ENCODE measurements at regions of chr4 and their contacts with region 1.

Region 1: DNA sequence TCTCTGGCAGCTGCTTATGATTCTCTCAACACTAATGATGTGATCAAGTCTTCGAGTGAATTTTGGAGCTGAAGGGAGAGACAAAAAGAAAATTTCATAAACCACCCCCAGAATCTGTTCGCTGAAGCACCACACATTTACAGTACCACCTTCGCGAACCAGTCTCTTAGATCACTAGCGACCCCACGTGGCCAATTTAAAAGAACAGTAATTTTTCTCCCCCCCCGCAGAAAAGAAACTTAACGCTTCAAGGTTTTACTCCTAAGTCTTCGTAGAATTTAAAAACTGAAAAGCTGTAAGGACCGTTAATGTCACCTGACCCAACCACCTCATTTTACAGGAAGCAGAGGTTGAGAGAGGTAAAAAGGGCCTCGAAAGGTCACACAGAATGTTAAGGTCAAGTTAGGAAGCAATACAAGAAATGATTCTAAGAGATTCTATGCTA is 187.5 kb downstream of the QDPR start:
- DNase-seq: peak; percentile 58 to 67 (median 64)
- ATAC-seq: peak; percentile 75
- H3K4me3 ChIP-seq: no peak overlapping the region
- H3K27ac ChIP-seq: no peak overlapping the region
- H3K4me1 ChIP-seq: no peaks in the 10 kb centered on the region
- H3K27me3 ChIP-seq: no peaks in the 10 kb centered on the region
- CTCF ChIP-seq: peak; percentile 63 to 83 (median 65)
- EP300 ChIP-seq: no peak
- POLR2A ChIP-seq: no peak
- RAD21 ChIP-seq: peak; percentile 77

Region 2: DNA sequence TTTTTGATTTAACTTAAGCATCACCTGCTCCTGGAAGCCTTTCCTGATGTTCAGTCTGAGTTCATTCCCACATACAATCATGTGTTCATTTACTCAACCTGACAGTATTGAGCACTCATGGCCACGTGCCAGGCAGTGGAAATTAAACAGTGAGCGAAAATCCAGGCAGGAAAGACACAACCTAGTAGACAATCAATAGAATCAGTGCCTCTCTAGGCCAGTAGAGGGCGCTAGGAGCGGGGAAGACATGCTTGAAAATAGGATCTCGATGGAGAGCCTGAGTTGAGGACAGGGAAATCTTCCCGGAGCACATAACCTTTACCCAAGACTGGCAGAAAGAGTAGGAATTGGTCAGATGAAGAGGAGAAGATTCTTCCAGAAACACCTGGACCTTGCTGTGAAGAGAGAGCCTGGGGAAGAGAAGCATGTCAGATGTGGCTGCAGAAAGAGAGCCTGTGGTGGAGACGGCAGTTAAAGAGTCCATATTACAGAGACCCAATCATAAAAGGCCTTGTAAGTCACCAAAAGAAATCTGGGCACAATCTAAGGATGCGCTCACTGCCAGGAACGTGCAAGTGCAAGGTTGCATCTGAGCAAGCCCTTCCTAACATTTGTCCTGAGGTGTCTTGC is 529.5 kb before region 1 on chr4:
- CTCF ChIA-PET with region 1: no interaction called
- POLR2A ChIA-PET with region 1: no interaction called
- in situ Hi-C with region 1: no loop called
- intact Hi-C with region 1: loop called (anchors 2 kb)
- DNase-seq: peak; percentile 30 to 63 (median 56)
- ATAC-seq: peak; percentile 78
- H3K4me3 ChIP-seq: no peak overlapping the region
- H3K27ac ChIP-seq: no peak overlapping the region
- H3K4me1 ChIP-seq: no peaks in the 10 kb centered on the region; a peak in 1 of 5 replicates
- H3K27me3 ChIP-seq: no peaks in the 10 kb centered on the region
- CTCF ChIP-seq: peak; percentile 61 to 76 (median 66)
- EP300 ChIP-seq: no peak
- POLR2A ChIP-seq: no peak
- RAD21 ChIP-seq: peak in 1 of 2 experiments; percentile 49; a peak in 1 of 4 replicates

Region 3: DNA sequence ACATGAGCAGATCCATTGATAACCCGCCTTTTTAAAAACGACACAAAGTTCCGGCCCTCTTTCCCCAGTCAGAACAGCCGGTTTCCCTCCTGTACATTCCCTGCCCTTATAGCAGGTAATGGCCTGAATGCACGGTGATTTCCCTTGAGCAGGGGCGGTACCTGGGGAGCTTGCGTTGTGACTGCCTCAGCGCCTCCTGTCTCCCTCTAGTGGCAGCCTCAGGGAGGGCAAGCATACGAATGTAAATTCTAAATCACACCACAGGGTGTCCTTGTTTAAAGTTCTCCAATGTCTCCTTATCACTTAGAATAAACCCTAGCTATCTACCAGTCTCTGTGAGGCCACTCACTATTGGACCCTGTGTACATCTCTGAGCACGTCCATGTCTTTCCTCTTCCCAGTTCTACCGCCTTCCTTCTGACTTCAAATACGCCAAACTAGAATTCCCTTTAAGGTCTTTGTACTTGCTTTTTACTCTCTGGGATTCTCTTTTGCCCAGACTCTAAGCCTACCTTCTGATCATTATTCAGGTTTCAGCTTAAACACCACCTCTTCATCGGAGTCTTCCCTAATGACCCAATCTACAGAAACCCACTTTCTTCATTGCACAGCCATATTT is 407.6 kb before region 1 on chr4:
- CTCF ChIA-PET with region 1: interaction called, 6 read pairs
- POLR2A ChIA-PET with region 1: no interaction called
- in situ Hi-C with region 1: no loop called
- intact Hi-C with region 1: loop called (anchors 5 kb)
- DNase-seq: peak; percentile 68 to 81 (median 76)
- ATAC-seq: peak; percentile 100
- H3K4me3 ChIP-seq: no peak overlapping the region
- H3K27ac ChIP-seq: no peak overlapping the region
- H3K4me1 ChIP-seq: no peaks in the 10 kb centered on the region
- H3K27me3 ChIP-seq: no peaks in the 10 kb centered on the region
- CTCF ChIP-seq: peak; percentile 96 to 100 (median 99)
- EP300 ChIP-seq: no peak
- POLR2A ChIP-seq: no peak
- RAD21 ChIP-seq: peak; percentile 46 to 76

Region 4: DNA sequence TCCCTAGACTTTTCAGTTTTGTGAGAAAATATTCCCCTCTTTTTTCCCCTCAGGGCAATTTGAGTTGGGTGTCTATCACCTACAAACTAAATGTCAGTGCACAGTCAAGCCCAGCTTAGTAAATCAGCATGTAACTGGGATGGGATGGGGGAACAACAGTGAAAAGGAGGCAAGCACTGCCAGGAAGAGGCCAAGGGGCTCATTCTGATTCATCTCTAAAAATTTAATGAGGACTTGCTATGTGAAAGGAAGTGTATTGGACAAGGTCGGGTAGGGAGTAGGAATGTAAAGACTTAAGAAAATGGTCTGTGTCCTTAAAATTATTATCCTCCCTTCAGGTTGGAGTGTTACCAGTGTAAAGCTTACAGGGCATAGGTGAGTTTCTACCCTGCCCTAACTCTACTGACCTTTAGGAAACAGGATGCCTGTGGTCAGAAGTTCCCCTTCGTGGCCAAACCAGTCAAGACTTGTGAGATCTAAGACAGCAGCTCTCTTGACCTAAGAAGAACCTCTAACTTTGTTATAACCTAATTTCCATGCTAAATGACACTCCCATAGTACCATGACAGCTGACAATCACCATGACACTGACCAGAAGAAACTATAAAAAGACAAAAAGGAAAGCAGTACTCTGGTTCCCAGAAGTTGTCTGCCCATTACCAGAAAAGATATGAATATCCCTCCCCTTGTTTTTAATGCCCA is 231.5 kb before region 1 on chr4:
- CTCF ChIA-PET with region 1: no interaction called
- POLR2A ChIA-PET with region 1: no interaction called
- in situ Hi-C with region 1: no loop called
- intact Hi-C with region 1: loop called (anchors 10 kb)
- DNase-seq: no peak
- ATAC-seq: no peak
- H3K4me3 ChIP-seq: no peak overlapping the region
- H3K27ac ChIP-seq: no peak overlapping the region
- H3K4me1 ChIP-seq: no peaks in the 10 kb centered on the region
- H3K27me3 ChIP-seq: no peaks in the 10 kb centered on the region
- CTCF ChIP-seq: no peak
- EP300 ChIP-seq: no peak
- POLR2A ChIP-seq: no peak
- RAD21 ChIP-seq: no peak

Region 5: DNA sequence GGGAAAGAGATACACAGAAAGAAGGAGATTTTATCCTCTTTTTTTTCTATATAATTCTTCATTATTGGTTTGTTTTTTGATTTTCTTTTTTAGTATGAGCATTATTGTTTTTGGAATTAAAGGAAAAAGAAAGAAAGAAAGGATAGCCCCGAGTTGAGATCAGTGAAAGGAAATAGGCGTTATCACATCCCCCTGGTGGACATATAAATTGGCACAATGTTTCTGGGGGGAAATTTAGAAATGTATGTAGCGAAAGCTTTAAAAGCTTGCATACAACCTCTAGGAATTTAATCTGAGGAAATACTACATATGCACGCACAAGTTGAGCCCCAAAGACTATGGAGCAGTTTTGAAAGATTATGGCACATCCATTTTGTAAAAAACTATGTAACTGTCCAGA is 199.6 kb before region 1 on chr4:
- CTCF ChIA-PET with region 1: no interaction called
- POLR2A ChIA-PET with region 1: no interaction called
- in situ Hi-C with region 1: no loop called
- intact Hi-C with region 1: no loop called
- DNase-seq: no peak
- ATAC-seq: no peak
- H3K4me3 ChIP-seq: no peak overlapping the region
- H3K27ac ChIP-seq: no peak overlapping the region
- H3K4me1 ChIP-seq: no peaks in the 10 kb centered on the region
- H3K27me3 ChIP-seq: no peaks in the 10 kb centered on the region; a peak in 1 of 5 replicates
- CTCF ChIP-seq: no peak
- EP300 ChIP-seq: no peak
- POLR2A ChIP-seq: no peak
- RAD21 ChIP-seq: no peak

Region 6: DNA sequence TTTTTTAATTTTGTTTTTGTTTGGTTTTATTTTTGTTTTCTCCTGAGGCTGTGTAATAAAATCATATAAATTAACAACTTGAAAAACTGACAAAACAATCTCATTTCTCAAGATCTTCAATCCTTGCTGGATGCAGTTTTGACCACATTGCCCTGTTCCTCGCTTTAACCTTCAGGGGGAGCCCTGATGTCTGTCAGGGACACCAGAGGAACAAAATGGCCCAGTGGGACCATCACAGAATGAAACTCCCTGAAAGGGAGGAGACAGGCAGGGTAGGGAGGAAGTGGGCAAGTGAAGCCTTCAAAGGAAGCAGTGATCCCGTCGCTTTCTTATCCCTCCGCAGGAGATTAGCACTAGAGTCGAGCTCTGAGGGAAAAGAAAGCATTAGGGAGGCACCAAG is 151.1 kb before region 1 on chr4:
- CTCF ChIA-PET with region 1: no interaction called
- POLR2A ChIA-PET with region 1: no interaction called
- in situ Hi-C with region 1: no loop called
- intact Hi-C with region 1: loop called (anchors 2 kb)
- DNase-seq: peak in 1 of 4 experiments; percentile 8
- ATAC-seq: peak; percentile 72
- H3K4me3 ChIP-seq: no peak overlapping the region
- H3K27ac ChIP-seq: no peak overlapping the region
- H3K4me1 ChIP-seq: no peaks in the 10 kb centered on the region
- H3K27me3 ChIP-seq: no peaks in the 10 kb centered on the region
- CTCF ChIP-seq: peak in 2 of 3 experiments; percentile 40 to 47; a peak in 4 of 6 replicates
- EP300 ChIP-seq: no peak
- POLR2A ChIP-seq: no peak
- RAD21 ChIP-seq: peak in 1 of 2 experiments; percentile 42; a peak in 2 of 4 replicates

Region 7: DNA sequence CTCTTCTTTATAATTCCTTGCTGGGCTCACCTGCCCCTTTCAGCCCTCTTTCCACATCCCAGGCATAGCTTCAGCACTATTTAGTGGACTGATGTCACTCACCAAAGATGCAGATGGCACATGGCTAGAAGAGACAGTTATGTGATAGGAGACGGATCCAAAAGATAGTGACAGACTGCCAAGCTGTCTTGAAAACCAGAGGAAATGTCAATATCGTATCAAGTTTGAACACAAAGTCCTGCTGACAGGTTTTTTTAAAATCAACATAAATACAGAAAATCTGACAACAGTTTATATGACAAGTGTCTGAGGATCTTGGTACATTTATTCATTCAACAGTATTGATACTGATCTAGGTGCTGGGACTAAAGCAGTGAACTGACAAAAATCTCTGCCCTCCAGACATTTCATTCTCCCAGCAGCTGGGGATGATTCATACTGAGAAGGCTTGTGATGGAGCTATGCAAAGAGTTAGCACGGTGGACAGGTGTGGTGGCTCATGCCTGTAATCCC is 205.1 kb after region 1 on chr4:
- CTCF ChIA-PET with region 1: no interaction called
- POLR2A ChIA-PET with region 1: no interaction called
- in situ Hi-C with region 1: no loop called
- intact Hi-C with region 1: no loop called
- DNase-seq: no peak
- ATAC-seq: no peak
- H3K4me3 ChIP-seq: no peak overlapping the region
- H3K27ac ChIP-seq: no peak overlapping the region
- H3K4me1 ChIP-seq: peaks cover 0 to 4% of the 10 kb centered on the region in 2 experiments; a peak in 1 of 5 replicates
- H3K27me3 ChIP-seq: peaks cover 16 to 27% of the 10 kb centered on the region in 2 experiments
- CTCF ChIP-seq: no peak
- EP300 ChIP-seq: no peak
- POLR2A ChIP-seq: no peak
- RAD21 ChIP-seq: no peak